ENCODE measurements at regions of chr20 and their contacts with region 1.

Region 1: DNA sequence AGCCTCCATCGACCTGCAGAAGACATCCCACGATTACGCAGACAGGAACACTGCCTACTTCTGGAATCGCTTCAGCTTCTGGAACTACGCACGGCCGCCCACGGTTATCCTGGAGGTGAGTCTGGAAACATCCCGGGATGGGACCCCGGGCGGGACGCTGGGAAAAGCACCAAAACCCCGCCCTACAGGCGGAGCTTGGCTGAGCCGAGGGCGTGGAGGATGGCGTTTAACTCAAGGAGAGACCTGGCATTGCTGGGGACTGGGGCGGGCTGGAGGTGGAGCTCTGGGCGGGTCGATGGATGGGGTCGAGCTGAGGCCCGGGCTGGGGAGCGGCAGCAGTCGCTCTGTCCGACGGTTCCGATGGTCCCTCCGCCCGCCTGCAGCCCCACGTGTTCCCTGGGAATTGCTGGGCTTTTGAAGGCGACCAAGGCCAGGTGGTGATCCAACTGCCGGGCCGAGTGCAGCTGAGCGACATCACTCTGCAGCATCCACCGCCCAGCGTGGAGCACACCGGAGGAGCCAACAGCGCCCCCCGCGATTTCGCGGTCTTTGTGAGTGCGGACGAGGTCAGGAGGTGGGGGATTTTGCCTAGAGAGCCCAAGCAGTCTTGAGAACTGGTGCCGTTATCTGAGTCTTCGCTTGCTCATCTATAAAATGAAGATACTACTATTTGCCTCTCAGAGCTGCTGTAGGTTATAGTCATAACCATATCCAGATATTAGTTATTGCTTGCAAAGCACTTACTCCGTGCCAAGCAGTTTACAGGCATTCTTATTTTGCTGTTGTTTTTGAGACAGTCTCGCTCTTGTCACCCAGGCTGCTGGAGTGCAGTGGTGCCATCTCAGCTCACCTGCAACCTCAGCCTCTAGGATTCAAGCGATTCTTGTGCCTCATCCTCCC is 3.8 kb downstream of the SPAG4 start:
- DNase-seq: peak; percentile 88
- H3K4me3 Mint-ChIP-seq: peak overlapping the region; percentile 82
- H3K27ac Mint-ChIP-seq: peak overlapping the region; percentile 70
- H3K4me1 Mint-ChIP-seq: peaks cover 47% of the 10 kb centered on the region
- H3K27me3 Mint-ChIP-seq: peaks cover 4% of the 10 kb centered on the region

Region 2: DNA sequence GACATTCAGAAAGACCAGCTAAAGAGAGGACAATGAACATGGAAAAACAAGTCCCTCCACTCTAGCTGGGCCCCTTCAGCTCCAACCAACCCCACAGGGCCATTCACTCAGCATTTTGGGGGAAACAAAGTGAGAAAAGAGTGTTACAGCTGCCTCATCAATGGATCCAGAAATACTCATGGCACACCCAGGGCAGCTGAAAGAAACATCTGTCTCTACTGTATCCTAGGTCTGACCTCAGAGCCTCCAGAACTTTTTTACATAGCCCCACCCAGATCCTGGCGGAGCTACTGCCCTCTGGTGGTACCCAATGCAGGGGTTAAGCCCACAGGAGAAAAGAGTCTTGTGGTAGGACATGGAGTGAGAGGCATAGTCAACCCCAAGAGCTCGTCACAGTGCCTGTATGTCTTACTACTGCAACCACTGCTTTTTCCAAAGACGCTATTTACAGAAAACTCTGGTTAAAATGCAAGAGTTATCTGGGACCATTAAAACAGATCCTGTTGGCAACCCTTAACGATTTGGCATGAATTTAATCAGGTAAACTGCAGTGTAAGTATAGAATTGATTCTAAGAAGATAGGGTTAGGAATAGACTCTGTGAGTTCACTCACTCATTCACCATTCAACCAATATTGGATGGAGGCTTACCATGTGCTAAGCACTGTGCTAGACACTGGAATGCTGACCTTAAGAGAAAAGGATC is 289.9 kb before region 1 on chr20:
- CTCF ChIA-PET with region 1: no interaction called
- intact Hi-C with region 1: no loop called
- DNase-seq: peak; percentile 81
- H3K4me3 Mint-ChIP-seq: no peak overlapping the region
- H3K27ac Mint-ChIP-seq: no peak overlapping the region
- H3K4me1 Mint-ChIP-seq: peaks cover 42% of the 10 kb centered on the region
- H3K27me3 Mint-ChIP-seq: no peaks in the 10 kb centered on the region

Region 3: DNA sequence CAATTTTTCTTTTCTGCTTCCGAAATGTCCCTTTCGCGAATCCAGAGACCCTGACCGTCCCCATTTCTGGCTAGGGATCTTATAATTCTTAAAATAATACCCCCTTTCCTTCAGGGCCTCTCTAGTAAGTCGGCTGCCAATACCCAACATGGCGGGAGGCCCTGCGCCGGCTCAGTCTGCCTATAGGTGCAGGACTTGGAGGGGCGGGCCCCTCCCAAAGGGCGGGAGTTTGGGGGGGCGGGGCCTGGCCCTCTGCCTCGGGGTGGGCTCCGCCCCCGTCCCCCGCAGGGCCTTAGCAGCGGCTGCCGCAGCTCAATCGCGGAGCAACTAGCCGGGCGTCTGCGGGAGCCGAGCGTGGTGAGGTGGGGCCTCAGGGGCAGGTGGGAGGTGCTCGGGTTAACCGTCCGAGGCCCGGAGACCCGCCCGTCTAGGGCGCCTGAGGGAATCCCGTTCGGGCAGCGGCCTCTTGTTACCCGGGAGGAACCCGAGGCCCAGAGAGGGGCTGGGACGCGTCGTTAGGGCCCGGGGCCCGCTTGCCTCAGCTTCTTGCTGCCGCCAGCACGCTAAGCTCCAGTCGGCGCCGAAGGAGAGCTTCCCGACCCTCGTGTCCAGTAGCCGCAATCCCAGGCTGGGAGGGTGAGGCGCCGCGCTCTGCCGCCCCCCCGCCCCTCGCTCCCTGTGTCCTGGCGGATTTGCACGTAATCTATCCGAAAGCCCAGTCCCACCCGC is 164.4 kb before region 1 on chr20 and contains the start of gene CEP250:
- CTCF ChIA-PET with region 1: no interaction called
- intact Hi-C with region 1: loop called (anchors 5 kb)
- DNase-seq: peak; percentile 94
- H3K4me3 Mint-ChIP-seq: peak within 1 kb of the TSS; percentile 89
- H3K27ac Mint-ChIP-seq: peak within 1 kb of the TSS; percentile 99
- H3K4me1 Mint-ChIP-seq: peaks cover 27% of the 10 kb centered on the region
- H3K27me3 Mint-ChIP-seq: no peaks in the 10 kb centered on the region
- total RNA-seq, gene CEP250: 43.4 to 46.9 TPM

Region 4: DNA sequence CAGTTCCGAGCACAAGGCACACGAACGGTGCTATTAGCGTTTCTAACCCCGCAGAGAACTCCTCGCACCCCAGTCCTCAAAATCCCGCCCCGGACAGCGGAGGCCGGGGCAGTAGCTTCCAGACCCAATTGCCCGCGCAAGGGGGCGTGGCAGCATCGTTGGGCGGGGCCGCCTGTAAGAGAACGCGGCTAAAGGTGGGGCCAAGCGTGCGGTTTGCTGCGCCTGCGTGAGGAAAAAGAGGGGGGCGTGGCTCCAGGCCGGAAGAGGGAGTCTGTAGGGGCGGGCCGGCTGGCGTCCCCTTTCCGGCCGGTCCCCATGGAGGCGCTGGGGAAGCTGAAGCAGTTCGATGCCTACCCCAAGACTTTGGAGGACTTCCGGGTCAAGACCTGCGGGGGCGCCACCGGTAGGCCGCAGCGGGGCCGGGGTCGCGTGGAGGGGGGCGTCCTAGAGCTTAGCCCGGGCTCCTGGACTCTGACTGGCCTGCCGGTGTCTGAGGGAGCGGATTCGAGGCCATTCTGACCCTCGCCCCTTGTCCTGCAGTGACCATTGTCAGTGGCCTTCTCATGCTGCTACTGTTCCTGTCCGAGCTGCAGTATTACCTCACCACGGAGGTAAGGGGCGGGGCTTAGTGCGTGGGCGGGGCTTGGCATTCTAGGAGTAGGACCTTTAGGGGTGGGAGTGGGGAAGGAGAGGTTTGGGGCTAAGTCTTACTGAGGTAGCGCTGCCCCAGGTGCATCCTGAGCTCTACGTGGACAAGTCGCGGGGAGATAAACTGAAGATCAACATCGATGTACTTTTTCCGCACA is 77.5 kb before region 1 on chr20 and contains the start of gene ERGIC3:
- CTCF ChIA-PET with region 1: interaction called, 3 read pairs
- intact Hi-C with region 1: loop called (anchors 1 kb)
- DNase-seq: peak; percentile 98
- H3K4me3 Mint-ChIP-seq: peak within 1 kb of the TSS; percentile 86
- H3K27ac Mint-ChIP-seq: peak within 1 kb of the TSS; percentile 80
- H3K4me1 Mint-ChIP-seq: peaks cover 19% of the 10 kb centered on the region
- H3K27me3 Mint-ChIP-seq: no peaks in the 10 kb centered on the region
- total RNA-seq, gene ERGIC3: 107 to 113 TPM

Region 5: GRCh38 chr20:35699127-35699975 is 79.9 kb after region 1 on chr20 and contains the starts of genes NFS1 and ROMO1:
- CTCF ChIA-PET with region 1: interaction called, 4 read pairs
- intact Hi-C with region 1: loop called (anchors 1 kb)
- DNase-seq: peak; percentile 89
- H3K4me3 Mint-ChIP-seq: peak within 1 kb of the TSS; percentile 93
- H3K27ac Mint-ChIP-seq: peak within 1 kb of the TSS; percentile 92
- H3K4me1 Mint-ChIP-seq: peaks cover 40% of the 10 kb centered on the region
- H3K27me3 Mint-ChIP-seq: no peaks in the 10 kb centered on the region
- total RNA-seq, gene NFS1: 33.6 to 38.1 TPM
- total RNA-seq, gene ROMO1: 120 to 134 TPM

Region 6: GRCh38 chr20:36050436-36051317 is 431.2 kb after region 1 on chr20:
- CTCF ChIA-PET with region 1: no interaction called
- intact Hi-C with region 1: loop called (anchors 5 kb)
- DNase-seq: peak; percentile 95
- H3K4me3 Mint-ChIP-seq: peak overlapping the region; percentile 82
- H3K27ac Mint-ChIP-seq: peak overlapping the region; percentile 83
- H3K4me1 Mint-ChIP-seq: peaks cover 35% of the 10 kb centered on the region
- H3K27me3 Mint-ChIP-seq: no peaks in the 10 kb centered on the region

Region 7: DNA sequence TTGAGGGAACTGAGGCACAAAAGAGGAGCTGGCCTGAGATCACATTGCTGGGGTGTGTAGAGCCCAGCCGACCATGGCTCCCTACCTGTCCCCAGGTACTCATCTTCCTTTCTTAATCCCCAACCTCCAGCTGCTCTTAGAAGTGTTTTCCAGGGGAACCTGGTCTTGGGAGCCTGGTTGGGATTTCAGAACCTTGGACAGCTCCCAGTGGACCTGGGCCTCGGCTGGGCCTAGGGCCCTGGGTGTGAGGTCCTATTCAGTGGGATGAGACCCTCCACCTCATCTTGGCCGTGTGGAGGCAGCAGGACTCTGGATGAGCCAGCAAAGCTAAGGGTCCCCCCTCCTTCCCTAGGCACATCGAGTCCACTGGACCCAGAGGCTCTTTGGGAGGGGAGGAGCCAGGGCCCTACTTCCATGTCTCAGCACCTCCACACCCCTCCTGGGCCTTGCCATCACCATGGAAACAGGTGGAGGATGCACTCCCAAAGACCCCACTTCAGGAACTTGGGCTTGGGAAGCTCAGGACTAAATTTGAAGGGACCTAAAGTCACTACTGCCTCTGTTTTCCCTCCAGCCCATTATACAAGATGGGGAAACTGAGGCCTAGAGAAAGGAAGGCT is 725.2 kb after region 1 on chr20:
- CTCF ChIA-PET with region 1: no interaction called
- intact Hi-C with region 1: no loop called
- DNase-seq: peak; percentile 49
- H3K4me3 Mint-ChIP-seq: no peak overlapping the region
- H3K27ac Mint-ChIP-seq: no peak overlapping the region
- H3K4me1 Mint-ChIP-seq: peaks cover 2% of the 10 kb centered on the region
- H3K27me3 Mint-ChIP-seq: no peaks in the 10 kb centered on the region

Measured in activated naive CD4-positive, alpha-beta T cell treated with anti-CD3 and anti-CD28 coated beads for 36 hours (primary cell).